Caco-2 (cell line): ENCODE measurements at regions of chr2 and their contacts with region 1.

Region 1: DNA sequence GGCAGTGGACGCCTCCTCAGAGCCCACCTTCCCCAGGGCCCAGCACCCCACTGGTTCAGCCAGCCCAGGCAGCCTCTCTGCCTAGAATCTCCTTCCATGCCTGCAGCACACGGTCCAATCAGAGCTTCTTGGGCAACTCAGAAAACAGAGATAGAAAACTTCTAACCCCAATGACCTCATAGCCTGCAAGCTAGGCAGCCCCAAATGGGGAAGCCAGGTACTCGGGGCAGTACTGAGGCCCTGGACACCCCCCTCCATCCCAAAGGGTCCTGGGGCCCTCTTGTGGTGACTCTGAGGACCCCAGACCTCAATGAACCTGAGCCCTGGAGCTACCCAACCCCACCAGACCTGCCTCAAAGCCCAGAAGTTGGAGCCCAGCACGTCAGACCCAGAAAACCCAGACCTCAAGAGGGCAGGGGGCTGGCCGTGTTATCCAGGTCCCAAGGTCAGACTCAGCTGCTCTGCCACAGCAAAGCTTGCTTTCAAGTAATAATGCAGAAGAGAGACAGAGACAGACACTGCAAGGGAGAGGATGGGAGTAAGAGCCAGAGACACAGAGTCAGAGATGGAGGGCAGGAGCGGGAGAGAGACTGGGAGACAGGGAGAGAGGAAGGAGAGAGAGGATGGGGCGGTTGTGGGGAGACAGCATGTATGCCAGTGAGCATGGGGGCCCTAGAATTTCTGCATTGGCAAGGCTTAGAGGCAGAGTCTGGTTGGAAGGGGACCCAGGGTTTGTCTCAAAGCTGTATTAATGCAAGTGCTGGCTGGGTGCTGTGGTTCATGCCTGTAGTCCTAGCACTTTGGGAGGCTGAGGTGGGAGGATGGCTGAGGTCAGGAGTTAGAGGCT is 28.2 kb downstream of the SERTAD2 start:
- DNase-seq: peak in 1 of 2 experiments; percentile 57
- H3K4me3 ChIP-seq: no peak overlapping the region
- H3K4me3 Mint-ChIP-seq: no peak overlapping the region
- H3K27ac Mint-ChIP-seq: no peak overlapping the region
- H3K4me1 ChIP-seq: no peaks in the 10 kb centered on the region
- H3K4me1 Mint-ChIP-seq: peaks cover 7% of the 10 kb centered on the region
- H3K27me3 ChIP-seq: no peaks in the 10 kb centered on the region; the same call in 1 of the 2 replicates
- H3K27me3 Mint-ChIP-seq: no peaks in the 10 kb centered on the region
- CTCF ChIP-seq: peak; percentile 41 to 63

Region 2: DNA sequence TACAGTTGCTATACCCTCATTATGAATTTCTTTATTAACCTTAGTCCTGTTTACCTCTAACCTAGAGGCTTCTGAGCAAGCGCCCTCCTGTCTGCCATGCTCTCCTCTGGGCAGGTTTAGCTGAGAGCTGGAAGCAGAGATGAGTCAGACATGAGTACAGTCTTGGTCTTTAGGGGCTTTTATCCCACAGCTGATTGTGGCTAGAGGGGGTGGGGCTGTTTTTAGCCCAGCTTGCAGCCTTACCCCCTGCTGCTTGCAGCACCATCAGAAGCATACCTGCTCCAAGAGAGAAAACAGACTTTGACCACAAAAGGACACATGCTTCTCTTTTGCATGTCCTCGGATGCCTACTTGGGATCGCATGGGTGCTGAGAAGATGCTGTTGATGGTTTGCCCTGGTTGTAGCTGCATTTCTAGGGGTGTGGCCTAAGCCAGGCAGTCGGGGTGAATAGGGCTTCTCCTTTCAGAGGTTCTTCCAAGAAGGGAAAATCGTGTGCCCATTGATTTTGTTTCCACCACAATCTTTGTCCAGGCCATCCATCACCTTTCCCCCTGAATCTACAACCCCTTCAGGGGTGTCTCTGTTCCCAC is 286.5 kb before region 1 on chr2:
- CTCF ChIA-PET with region 1: no interaction called
- POLR2A ChIA-PET with region 1: no interaction called
- intact Hi-C with region 1: no loop called
- DNase-seq: no peak
- H3K4me3 ChIP-seq: no peak overlapping the region
- H3K4me3 Mint-ChIP-seq: no peak overlapping the region
- H3K27ac Mint-ChIP-seq: no peak overlapping the region
- H3K4me1 ChIP-seq: no peaks in the 10 kb centered on the region
- H3K4me1 Mint-ChIP-seq: peaks cover 6% of the 10 kb centered on the region
- H3K27me3 ChIP-seq: no peaks in the 10 kb centered on the region
- H3K27me3 Mint-ChIP-seq: no peaks in the 10 kb centered on the region
- CTCF ChIP-seq: no peak

Region 3: DNA sequence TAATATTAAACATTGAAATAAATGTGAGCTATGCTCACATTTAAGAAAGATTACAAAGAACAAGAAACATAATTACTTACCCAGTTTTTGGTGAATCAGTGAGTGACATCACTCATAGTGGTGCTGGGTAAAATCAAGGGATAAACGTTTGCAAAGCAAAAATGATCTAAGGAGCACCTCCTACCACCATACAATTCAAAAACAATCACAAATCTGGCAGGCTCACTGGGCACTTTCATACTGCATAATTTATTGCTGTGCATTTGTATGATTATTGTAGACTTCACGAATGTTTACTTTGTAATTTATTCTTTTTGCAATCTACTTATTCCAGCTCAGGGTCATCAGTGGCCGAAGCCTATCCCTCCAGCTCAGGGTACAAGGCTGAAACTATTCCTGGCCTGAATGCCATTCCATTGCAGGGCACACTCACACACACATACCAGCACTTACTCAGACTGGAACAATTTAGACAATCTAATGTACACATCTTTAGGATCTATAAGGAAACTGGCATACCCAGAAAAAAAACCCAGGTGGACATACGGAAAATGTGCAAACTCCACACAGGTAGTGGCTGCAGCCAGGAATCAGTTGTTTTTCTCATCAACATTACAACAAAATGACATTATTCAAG is 67.0 kb before region 1 on chr2:
- CTCF ChIA-PET with region 1: no interaction called
- POLR2A ChIA-PET with region 1: no interaction called
- intact Hi-C with region 1: no loop called
- DNase-seq: no peak
- H3K4me3 ChIP-seq: no peak overlapping the region
- H3K4me3 Mint-ChIP-seq: no peak overlapping the region
- H3K27ac Mint-ChIP-seq: no peak overlapping the region
- H3K4me1 ChIP-seq: no peaks in the 10 kb centered on the region
- H3K4me1 Mint-ChIP-seq: no peaks in the 10 kb centered on the region
- H3K27me3 ChIP-seq: no peaks in the 10 kb centered on the region
- H3K27me3 Mint-ChIP-seq: no peaks in the 10 kb centered on the region
- CTCF ChIP-seq: no peak

Region 4: DNA sequence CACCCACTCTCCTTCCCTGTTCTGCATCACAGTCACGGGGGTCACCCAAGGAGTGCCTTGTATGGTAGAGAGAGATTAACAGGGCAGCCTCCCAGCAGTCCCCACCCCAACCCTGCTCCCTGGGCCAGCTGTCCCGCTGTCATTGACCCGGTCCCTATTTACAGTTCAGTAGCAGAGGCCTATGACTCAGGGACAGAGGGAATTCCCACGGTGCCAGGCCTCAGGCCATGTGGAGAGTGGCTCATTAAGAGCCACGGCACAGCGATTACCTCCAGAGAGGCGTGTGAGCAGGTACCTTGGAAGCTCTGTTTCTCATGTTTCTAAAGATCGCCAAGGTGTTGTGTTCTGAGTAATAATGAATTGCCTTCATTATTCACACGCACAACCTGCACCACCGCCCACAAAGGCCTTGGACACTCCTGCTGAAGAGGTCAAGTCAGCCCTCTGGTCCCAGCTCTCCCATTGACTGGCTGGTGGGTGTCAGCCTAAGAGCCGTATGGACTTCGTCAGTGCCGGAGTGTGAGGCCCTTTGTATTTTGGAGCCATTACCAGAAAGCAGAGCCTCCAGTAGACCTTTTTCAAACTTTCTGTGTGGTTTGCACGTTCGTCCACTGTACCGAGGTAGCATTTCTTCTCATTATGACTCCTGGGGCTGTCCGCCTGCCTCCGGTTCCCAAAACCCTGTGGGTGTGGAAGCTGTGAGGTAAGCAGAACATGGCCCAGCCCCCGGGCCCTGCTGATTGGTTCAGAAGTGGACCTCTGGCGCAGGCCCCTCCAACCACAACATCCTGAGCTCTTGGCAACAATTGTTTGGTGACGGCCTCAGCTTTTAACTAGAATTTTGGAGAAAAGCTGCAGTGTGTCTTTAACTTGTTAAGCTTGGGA is 18.8 kb before region 1 on chr2:
- CTCF ChIA-PET with region 1: interaction called, 11 read pairs
- POLR2A ChIA-PET with region 1: no interaction called
- intact Hi-C with region 1: no loop called
- DNase-seq: peak in 1 of 2 experiments; percentile 42
- H3K4me3 ChIP-seq: no peak overlapping the region
- H3K4me3 Mint-ChIP-seq: peak overlapping the region; percentile 41
- H3K27ac Mint-ChIP-seq: no peak overlapping the region
- H3K4me1 ChIP-seq: peaks cover 21% of the 10 kb centered on the region
- H3K4me1 Mint-ChIP-seq: peaks cover 14% of the 10 kb centered on the region
- H3K27me3 ChIP-seq: no peaks in the 10 kb centered on the region
- H3K27me3 Mint-ChIP-seq: no peaks in the 10 kb centered on the region
- CTCF ChIP-seq: no peak